HepG2 (cell line): ENCODE measurements at regions of chr22 and their contacts with region 1.

Region 1: DNA sequence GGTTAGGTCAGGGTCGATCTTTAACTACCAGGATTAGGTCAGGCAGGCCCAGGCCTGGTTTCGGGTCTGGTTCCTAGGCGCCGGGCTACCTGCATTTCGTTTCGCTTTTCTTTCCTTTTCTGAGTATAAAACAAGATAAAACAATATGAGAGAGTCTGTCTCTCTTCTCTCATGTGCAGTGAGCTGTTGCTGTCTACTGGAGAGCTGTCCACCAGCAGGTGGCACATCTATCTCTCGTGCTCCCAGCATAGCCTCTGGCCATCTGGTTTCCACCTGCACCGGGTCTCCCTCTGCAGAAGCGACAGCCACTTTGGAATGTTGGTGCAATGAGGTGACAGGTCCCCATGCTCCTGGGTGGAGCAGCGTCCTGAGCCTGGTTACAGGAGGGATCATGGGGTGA is 27.6 kb downstream of the RIBC2 start:
- DNase-seq: peak; percentile 71
- ATAC-seq: peak; percentile 97
- H3K4me3 ChIP-seq: peak overlapping the region; percentile 22 to 44 (median 32); a peak in 4 of 6 replicates
- H3K27ac ChIP-seq: no peak overlapping the region
- H3K4me1 ChIP-seq: peaks cover 47% of the 10 kb centered on the region
- H3K27me3 ChIP-seq: no peaks in the 10 kb centered on the region
- CTCF ChIP-seq: peak; percentile 93
- EP300 ChIP-seq: no peak
- POLR2A ChIP-seq: no peak
- RAD21 ChIP-seq: peak; percentile 84

Region 2: GRCh38 chr22:45483918-45484499 is 42.9 kb after region 1 on chr22:
- CTCF ChIA-PET with region 1: no interaction called
- POLR2A ChIA-PET with region 1: interaction called, 3 read pairs
- in situ Hi-C with region 1: no loop called
- intact Hi-C with region 1: loop called (anchors 5 kb)
- DNase-seq: peak; percentile 63
- ATAC-seq: peak; percentile 91
- H3K4me3 ChIP-seq: peak overlapping the region; percentile 14 to 45 (median 44); a peak in 5 of 6 replicates
- H3K27ac ChIP-seq: peak overlapping the region; percentile 68
- H3K4me1 ChIP-seq: peaks cover 53% of the 10 kb centered on the region
- H3K27me3 ChIP-seq: no peaks in the 10 kb centered on the region
- CTCF ChIP-seq: no peak
- EP300 ChIP-seq: peak in 1 of 2 experiments; percentile 64; a peak in 2 of 4 replicates
- POLR2A ChIP-seq: peak; percentile 29 to 57; a peak in 2 of 4 replicates
- RAD21 ChIP-seq: no peak

Region 3: GRCh38 chr22:45553351-45554039 is 112.4 kb after region 1 on chr22:
- CTCF ChIA-PET with region 1: interaction called, 32 read pairs
- POLR2A ChIA-PET with region 1: interaction called, 6 read pairs
- in situ Hi-C with region 1: loop called (anchors 5 kb)
- intact Hi-C with region 1: loop called (anchors 1 kb)
- DNase-seq: peak; percentile 73
- ATAC-seq: peak; percentile 82
- H3K4me3 ChIP-seq: no peak overlapping the region; a peak in 1 of 6 replicates
- H3K27ac ChIP-seq: peak overlapping the region; percentile 43
- H3K4me1 ChIP-seq: peaks cover 31% of the 10 kb centered on the region
- H3K27me3 ChIP-seq: no peaks in the 10 kb centered on the region
- CTCF ChIP-seq: peak; percentile 98
- EP300 ChIP-seq: no peak
- POLR2A ChIP-seq: no peak
- RAD21 ChIP-seq: peak; percentile 94